Activated naive CD4-positive, alpha-beta T cell treated with anti-CD3 and anti-CD28 coated beads for 36 hours (primary cell): ENCODE measurements at regions of chr12 and their contacts with region 1.

Region 1: GRCh38 chr12:21169878-21170472 is 39.0 kb downstream of the SLCO1B1 start:
- DNase-seq: peak; percentile 47
- H3K4me3 Mint-ChIP-seq: no peak overlapping the region
- H3K27ac Mint-ChIP-seq: no peak overlapping the region
- H3K4me1 Mint-ChIP-seq: no peaks in the 10 kb centered on the region
- H3K27me3 Mint-ChIP-seq: no peaks in the 10 kb centered on the region

Region 2: DNA sequence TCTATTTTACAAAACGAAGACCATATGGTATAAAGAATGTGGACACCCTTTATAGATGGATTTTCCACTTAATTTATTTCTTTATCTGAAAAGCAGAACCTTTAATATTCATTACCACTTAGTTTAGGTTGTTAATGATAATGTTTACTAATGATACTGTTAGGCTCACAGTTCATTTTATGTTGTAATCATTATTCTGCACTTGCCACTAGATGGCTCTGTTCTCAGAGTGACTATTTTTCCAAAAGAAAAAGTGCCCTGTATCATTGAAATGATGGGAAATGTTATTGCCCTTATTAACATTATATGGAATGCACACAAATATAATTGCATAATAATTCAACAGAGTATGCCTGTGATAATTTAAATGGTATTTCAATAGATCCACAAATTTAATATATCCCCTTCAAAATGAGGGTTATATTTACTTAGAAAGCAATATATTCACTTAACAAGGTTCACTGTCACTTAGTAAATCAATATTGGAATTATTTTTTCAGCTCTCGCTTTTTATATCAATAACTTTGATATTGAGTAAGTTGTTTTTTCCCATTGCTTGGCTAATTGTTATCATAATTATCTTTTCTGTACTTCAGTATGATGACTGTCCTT is 706.0 kb before region 1 on chr12:
- CTCF ChIA-PET with region 1: no interaction called
- intact Hi-C with region 1: loop called (anchors 5 kb)
- DNase-seq: no peak
- H3K4me3 Mint-ChIP-seq: no peak overlapping the region
- H3K27ac Mint-ChIP-seq: no peak overlapping the region
- H3K4me1 Mint-ChIP-seq: no peaks in the 10 kb centered on the region
- H3K27me3 Mint-ChIP-seq: no peaks in the 10 kb centered on the region

Region 3: DNA sequence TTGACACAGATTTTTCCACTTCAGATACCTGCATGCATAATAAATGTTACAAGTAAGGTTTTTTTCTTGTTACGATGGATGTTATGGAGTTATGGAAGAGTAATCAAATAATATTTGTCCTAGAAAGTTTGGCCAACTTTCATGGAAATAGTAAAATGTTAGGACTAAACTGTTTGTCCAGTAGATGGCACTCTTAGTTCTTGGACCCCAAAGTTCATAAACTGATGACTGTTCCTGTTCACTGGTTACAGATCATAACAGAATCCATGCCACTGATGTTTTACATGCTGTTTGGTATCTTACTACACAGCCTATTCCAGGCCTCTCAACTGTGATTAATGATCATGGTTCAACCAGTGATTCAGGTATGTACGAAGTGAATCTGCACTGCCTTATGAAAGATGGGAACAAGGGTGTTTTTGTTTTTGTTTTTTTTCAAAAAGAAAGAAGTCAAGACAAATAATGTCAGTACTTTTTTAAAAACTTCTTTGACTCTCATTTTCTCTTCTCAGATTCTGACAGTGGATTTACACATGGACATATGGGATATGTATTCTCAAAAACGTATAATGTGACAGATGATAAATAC is 523.6 kb before region 1 on chr12:
- CTCF ChIA-PET with region 1: no interaction called
- intact Hi-C with region 1: loop called (anchors 1 kb)
- DNase-seq: no peak
- H3K4me3 Mint-ChIP-seq: no peak overlapping the region
- H3K27ac Mint-ChIP-seq: no peak overlapping the region
- H3K4me1 Mint-ChIP-seq: no peaks in the 10 kb centered on the region
- H3K27me3 Mint-ChIP-seq: no peaks in the 10 kb centered on the region

Region 4: DNA sequence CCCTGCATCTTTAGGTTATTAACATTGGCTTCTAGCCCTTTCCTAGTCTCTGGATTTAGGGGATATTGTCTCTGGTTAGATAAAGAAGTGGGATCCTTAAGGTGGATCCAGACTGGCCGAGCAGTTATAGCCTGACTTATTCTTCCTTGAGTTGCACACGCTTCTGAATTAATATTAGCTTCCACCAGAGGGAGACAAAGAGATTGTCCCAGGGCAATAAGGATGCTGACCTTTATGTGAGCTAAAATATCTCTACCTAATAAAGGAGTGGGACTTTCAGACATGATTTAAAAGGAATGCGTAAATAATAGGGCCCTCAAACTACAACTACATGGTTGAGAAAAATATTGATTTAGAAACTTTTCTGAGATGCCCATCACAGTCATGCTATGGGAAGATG is 219.7 kb before region 1 on chr12:
- CTCF ChIA-PET with region 1: no interaction called
- intact Hi-C with region 1: loop called (anchors 1 kb)
- DNase-seq: no peak
- H3K4me3 Mint-ChIP-seq: no peak overlapping the region
- H3K27ac Mint-ChIP-seq: no peak overlapping the region
- H3K4me1 Mint-ChIP-seq: no peaks in the 10 kb centered on the region
- H3K27me3 Mint-ChIP-seq: no peaks in the 10 kb centered on the region

Region 5: GRCh38 chr12:21183721-21184275 is 13.8 kb after region 1 on chr12:
- CTCF ChIA-PET with region 1: no interaction called
- intact Hi-C with region 1: no loop called
- DNase-seq: no peak
- H3K4me3 Mint-ChIP-seq: no peak overlapping the region
- H3K27ac Mint-ChIP-seq: no peak overlapping the region
- H3K4me1 Mint-ChIP-seq: no peaks in the 10 kb centered on the region
- H3K27me3 Mint-ChIP-seq: no peaks in the 10 kb centered on the region

Region 6: DNA sequence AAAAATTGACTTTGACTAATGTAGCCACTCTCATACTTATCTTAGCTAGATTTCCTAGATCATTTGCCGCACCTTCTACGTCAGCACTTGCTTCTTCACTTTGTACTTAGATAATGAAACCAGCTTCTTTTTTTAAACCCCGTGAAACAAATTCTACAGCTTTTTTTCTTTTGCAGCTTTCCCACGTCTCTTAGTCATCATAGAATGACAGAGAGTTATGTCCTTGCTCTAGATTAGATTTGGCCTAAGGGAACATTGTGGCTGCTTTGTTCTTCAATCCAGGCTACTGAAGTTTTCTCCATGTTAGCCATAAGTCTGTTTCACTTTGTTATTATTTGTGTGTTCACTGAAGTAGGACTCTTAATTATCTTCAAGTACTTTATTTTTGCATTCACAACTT is 69.9 kb after region 1 on chr12:
- CTCF ChIA-PET with region 1: no interaction called
- intact Hi-C with region 1: no loop called
- DNase-seq: no peak
- H3K4me3 Mint-ChIP-seq: no peak overlapping the region
- H3K27ac Mint-ChIP-seq: no peak overlapping the region
- H3K4me1 Mint-ChIP-seq: no peaks in the 10 kb centered on the region
- H3K27me3 Mint-ChIP-seq: peaks cover 8% of the 10 kb centered on the region